Natural killer cell (primary cell): ENCODE measurements at regions of chr2 and their contacts with region 1.

Region 1: DNA sequence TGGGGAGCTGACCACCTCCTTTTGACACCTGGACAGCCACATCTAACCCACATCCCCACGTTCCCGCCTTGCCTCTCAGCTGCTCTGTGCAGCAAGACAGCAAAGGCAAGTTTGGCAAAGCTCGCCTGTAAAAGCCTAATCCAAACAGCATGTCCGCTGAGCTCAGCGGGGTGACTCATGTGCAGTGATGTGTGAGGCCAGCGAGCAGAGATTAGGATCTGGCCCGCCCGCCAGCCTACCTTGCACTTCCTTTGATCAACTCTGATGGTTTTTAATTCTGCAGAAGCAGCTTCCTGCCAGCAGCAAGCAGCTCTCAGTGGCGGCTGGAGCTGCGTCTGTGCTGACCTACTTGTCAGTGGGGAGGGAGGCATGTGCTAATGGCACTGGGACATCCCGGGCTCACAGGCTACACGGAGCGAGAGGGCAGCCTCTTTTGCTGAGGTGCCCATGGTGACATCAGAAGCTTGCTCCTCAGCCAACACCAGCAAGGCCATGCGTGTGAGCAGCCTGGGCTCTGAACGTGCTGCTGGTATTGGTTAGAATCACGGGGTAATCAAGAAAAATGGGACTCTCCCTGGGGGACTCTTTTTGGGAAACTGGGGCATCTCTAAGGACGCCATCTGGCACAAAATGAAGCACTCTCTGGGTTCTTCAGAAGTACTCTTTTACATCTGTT is 36.0 kb upstream of the EML4 start:
- DNase-seq: peak; percentile 80 to 96
- ATAC-seq: peak; percentile 89 to 96 (median 92)
- H3K4me3 ChIP-seq: no peak overlapping the region
- H3K4me3 Mint-ChIP-seq: peak overlapping the region; percentile 67
- H3K27ac ChIP-seq: peak overlapping the region; percentile 89
- H3K27ac Mint-ChIP-seq: peak overlapping the region; percentile 89 to 95
- H3K4me1 ChIP-seq: peaks cover 71% of the 10 kb centered on the region
- H3K4me1 Mint-ChIP-seq: peaks cover 47 to 55% of the 10 kb centered on the region in 2 donors
- H3K27me3 ChIP-seq: no peaks in the 10 kb centered on the region
- H3K27me3 Mint-ChIP-seq: no peaks in the 10 kb centered on the region
- CTCF ChIP-seq: no peak

Region 2: DNA sequence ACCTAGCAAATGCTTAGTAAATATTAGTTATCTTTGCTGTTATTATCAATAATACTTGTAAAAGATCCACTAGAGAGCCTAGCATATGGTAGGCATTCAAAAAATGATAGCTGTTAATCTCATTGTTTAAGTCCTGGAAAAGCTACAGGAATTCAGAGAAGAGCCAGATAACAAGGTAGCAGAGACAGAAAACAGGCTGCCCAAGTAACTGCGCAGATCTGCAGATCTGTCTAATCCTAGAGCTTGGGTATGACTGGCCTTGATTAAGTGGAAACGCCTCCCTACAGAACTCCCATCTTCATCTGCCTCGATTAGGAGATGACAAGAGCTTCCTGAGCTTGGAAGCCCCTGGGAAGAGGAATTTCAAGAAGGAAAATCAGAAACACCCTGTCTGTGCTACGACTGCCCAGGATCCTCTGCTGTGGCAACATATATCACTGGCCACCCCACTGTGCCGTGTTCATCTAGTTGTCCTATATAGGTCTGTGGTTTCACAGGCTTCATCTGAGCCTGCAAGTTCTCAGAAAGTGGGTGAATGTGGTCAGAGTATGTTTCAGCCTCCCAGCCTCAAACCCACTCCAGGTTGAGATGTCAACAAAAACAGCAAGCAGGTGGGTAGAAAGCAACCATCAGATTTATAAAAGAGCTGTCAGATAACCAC is 236.8 kb before region 1 on chr2:
- intact Hi-C with region 1: loop called (anchors 2 kb)
- DNase-seq: peak; percentile 27 to 73
- ATAC-seq: peak; percentile 85 to 99 (median 87)
- H3K4me3 ChIP-seq: no peak overlapping the region
- H3K4me3 Mint-ChIP-seq: peak overlapping the region; percentile 75
- H3K27ac ChIP-seq: peak overlapping the region; percentile 18
- H3K27ac Mint-ChIP-seq: peak overlapping the region in 1 of 2 donors; percentile 39
- H3K4me1 ChIP-seq: peaks cover 39% of the 10 kb centered on the region
- H3K4me1 Mint-ChIP-seq: peaks cover 40 to 41% of the 10 kb centered on the region in 2 donors
- H3K27me3 ChIP-seq: no peaks in the 10 kb centered on the region
- H3K27me3 Mint-ChIP-seq: peaks cover 45 to 87% of the 10 kb centered on the region in 2 donors
- CTCF ChIP-seq: no peak

Region 3: GRCh38 chr2:42102024-42102590 is 31.0 kb before region 1 on chr2:
- intact Hi-C with region 1: loop called (anchors 1 kb)
- DNase-seq: peak; percentile 94 to 98
- ATAC-seq: peak; percentile 80 to 92 (median 86)
- H3K4me3 ChIP-seq: peak overlapping the region; percentile 41
- H3K4me3 Mint-ChIP-seq: peak overlapping the region; percentile 87
- H3K27ac ChIP-seq: peak overlapping the region; percentile 99
- H3K27ac Mint-ChIP-seq: peak overlapping the region in 1 of 2 donors; percentile 99
- H3K4me1 ChIP-seq: peaks cover 93% of the 10 kb centered on the region
- H3K4me1 Mint-ChIP-seq: peaks cover 28 to 49% of the 10 kb centered on the region in 2 donors
- H3K27me3 ChIP-seq: no peaks in the 10 kb centered on the region
- H3K27me3 Mint-ChIP-seq: no peaks in the 10 kb centered on the region
- CTCF ChIP-seq: no peak

Region 4: DNA sequence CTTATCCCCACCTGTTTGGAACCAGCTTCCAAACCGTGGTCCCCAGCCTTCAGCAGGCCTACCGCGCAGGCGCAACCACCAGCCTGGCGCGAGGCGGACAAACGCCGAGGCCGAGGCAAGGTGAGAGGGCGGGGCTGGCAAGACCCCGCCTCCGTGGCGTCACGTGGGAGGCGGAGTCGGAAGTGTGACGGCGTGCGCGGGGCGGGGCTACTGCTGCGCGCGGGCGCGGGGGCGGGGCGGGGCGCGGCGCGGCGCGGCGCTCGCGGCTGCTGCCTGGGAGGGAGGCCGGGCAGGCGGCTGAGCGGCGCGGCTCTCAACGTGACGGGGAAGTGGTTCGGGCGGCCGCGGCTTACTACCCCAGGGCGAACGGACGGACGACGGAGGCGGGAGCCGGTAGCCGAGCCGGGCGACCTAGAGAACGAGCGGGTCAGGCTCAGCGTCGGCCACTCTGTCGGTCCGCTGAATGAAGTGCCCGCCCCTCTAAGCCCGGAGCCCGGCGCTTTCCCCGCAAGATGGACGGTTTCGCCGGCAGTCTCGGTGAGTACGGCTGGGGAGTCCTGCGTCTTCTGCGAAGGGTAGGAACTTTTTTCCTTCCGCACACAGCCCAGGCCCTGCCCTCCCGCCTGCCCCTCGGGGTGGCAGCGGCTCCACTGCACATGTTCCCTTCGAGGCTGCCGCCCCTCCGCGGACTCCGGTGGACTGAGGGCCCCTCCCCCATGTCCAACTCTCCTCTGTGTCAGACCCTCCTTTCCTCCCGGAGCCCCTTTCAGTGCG is 36.2 kb after region 1 on chr2 and contains the start of gene EML4:
- intact Hi-C with region 1: loop called (anchors 1 kb)
- DNase-seq: peak; percentile 94 to 96
- ATAC-seq: peak; percentile 92 to 98 (median 94)
- H3K4me3 ChIP-seq: peak within 1 kb of the TSS; percentile 96
- H3K4me3 Mint-ChIP-seq: peak within 1 kb of the TSS; percentile 45
- H3K27ac ChIP-seq: peak within 1 kb of the TSS; percentile 94
- H3K27ac Mint-ChIP-seq: no peak within 1 kb of the TSS
- H3K4me1 ChIP-seq: peaks cover 19% of the 10 kb centered on the region
- H3K4me1 Mint-ChIP-seq: peaks cover 0 to 7% of the 10 kb centered on the region in 2 donors
- H3K27me3 ChIP-seq: no peaks in the 10 kb centered on the region
- H3K27me3 Mint-ChIP-seq: peaks cover 3 to 4% of the 10 kb centered on the region in 2 donors
- CTCF ChIP-seq: no peak
- total RNA-seq, gene EML4: 88.4 to 136 (median 91.5) TPM

Region 5: GRCh38 chr2:42183775-42184174 is 50.7 kb after region 1 on chr2:
- intact Hi-C with region 1: loop called (anchors 2 kb)
- DNase-seq: peak in 1 of 2 donors; percentile 44
- ATAC-seq: peak; percentile 88 to 92 (median 89)
- H3K4me3 ChIP-seq: no peak overlapping the region
- H3K4me3 Mint-ChIP-seq: no peak overlapping the region
- H3K27ac ChIP-seq: no peak overlapping the region
- H3K27ac Mint-ChIP-seq: peak overlapping the region; percentile 77 to 80
- H3K4me1 ChIP-seq: peaks cover 16% of the 10 kb centered on the region
- H3K4me1 Mint-ChIP-seq: peaks cover 35 to 43% of the 10 kb centered on the region in 2 donors
- H3K27me3 ChIP-seq: no peaks in the 10 kb centered on the region
- H3K27me3 Mint-ChIP-seq: no peaks in the 10 kb centered on the region
- CTCF ChIP-seq: no peak

Region 6: GRCh38 chr2:42196403-42197267 is 63.5 kb after region 1 on chr2:
- intact Hi-C with region 1: loop called (anchors 1 kb)
- DNase-seq: peak in 1 of 2 donors; percentile 76
- ATAC-seq: peak; percentile 84 to 88 (median 84)
- H3K4me3 ChIP-seq: no peak overlapping the region
- H3K4me3 Mint-ChIP-seq: no peak overlapping the region
- H3K27ac ChIP-seq: no peak overlapping the region
- H3K27ac Mint-ChIP-seq: peak overlapping the region; percentile 12 to 35
- H3K4me1 ChIP-seq: peaks cover 12% of the 10 kb centered on the region
- H3K4me1 Mint-ChIP-seq: peaks cover 38 to 39% of the 10 kb centered on the region in 2 donors
- H3K27me3 ChIP-seq: no peaks in the 10 kb centered on the region
- H3K27me3 Mint-ChIP-seq: no peaks in the 10 kb centered on the region
- CTCF ChIP-seq: peak; percentile 54

Region 7: DNA sequence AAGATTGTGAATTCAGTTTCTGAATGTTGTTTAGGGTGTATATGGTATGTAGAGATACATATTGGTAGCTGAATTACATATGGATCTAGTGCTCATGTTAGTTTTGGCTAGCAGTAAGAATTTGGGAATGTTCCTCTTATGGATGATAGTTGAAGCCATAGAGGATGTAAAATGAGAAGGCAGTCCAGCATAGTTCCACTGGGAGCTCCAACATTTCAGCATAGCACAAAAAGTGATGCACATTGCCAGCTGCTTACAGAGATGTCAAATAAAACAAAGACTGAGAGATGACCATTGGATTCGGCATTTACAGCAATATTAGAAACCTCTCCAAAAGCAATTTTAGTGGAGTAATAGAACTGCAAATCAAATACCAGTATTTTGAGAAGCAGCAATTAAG is 113.5 kb after region 1 on chr2:
- intact Hi-C with region 1: no loop called
- DNase-seq: no peak
- ATAC-seq: no peak
- H3K4me3 ChIP-seq: no peak overlapping the region
- H3K4me3 Mint-ChIP-seq: no peak overlapping the region
- H3K27ac ChIP-seq: no peak overlapping the region
- H3K27ac Mint-ChIP-seq: no peak overlapping the region
- H3K4me1 ChIP-seq: peaks cover 10% of the 10 kb centered on the region
- H3K4me1 Mint-ChIP-seq: peaks cover 32 to 39% of the 10 kb centered on the region in 2 donors
- H3K27me3 ChIP-seq: no peaks in the 10 kb centered on the region
- H3K27me3 Mint-ChIP-seq: no peaks in the 10 kb centered on the region
- CTCF ChIP-seq: no peak